Psoas muscle (tissue), 8 donors: ENCODE measurements at regions of chr20 and their contacts with region 1.

Region 1: DNA sequence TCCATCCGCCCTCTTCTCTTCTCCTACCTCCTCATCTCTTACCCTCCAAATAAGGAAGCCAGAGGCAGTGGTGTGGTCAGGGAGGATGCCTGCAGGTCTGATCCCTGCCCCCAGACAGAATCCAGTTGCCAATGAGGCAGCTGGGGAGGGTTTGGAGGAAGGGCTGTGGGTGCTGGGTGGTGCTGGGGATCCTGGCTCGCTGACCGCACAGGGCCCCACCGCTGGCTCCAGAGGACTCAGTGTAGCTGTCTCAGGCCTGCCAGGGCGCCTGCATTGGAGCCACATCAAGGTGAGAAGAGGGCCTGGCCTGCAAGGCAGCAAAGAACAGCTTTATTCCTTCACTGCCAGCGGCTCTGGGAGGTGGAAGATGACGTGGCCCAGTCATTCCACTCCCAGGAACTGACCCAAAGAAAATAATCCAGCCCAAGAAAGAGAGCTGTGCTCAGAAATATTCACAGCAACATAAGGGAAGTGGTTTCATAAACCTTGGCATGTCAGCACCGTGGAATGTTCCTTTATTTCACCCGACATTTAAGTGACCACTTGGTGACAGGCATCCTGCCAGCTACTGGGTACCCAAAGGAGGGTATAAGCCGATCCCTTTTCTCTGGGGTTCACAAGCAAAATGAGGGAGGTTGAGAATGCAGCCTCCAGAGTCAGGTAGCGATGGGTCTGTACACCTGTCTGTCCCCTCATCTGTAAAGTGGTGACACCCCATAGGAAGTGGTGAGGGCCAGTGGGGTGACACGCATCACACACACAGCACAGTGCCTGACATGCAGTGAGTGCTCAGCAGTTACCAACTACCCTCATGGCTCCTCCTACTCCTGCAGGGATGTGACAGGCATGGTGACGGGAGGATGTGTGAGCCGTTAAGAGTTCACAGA is 125.1 kb downstream of the SNX5 start:
- DNase-seq: peak in 1 of 2 donors; percentile 47
- ATAC-seq: peak in 3 of 4 donors; percentile 19 to 51 (median 51)
- H3K4me3 ChIP-seq: no peak overlapping the region
- H3K27ac ChIP-seq: peak overlapping the region; percentile 53
- H3K4me1 ChIP-seq: no peaks in the 10 kb centered on the region
- H3K27me3 ChIP-seq: peaks cover 0 to 2% (median 0%) of the 10 kb centered on the region in 3 donors
- CTCF ChIP-seq: no peak

Region 2: DNA sequence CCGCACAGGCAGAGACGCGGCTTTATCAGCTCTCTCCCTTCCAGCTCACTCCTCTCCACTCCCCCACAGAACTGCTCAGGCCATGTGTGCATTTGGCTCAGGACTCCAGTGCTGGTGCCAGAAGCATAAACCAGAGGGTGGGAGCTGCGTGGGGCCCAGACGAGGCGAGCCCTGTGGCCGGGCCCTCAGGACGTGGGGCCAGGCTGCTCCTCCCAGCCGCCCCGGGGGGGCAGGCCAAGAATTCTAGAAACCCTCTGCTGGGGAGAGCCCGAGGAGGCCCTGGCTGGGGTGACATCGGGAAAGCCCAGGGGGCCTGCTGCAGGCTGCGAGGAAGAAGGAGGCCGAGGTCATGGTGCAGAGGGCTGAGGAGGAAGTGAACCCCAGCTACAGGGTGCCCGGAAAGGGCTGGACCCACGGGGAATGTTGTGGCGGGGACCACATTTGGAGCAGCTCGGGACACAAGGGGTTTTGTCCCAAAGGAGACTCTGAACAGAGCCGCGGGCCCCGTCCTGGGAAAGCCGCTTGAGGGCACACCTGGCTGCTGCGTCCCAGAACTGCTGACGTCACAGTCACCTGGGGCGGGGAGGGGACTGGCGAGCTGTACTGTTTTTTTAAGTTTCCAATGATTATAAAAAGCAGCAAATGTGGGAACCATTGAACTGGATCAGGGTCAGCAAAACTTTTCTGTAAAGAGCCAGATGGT is 36.6 kb before region 1 on chr20:
- intact Hi-C with region 1: loop called in 1 of 2 experiments (anchors 5 kb)
- DNase-seq: peak; percentile 77 to 82
- ATAC-seq: peak; percentile 45 to 71 (median 56)
- H3K4me3 ChIP-seq: peak overlapping the region; percentile 25
- H3K27ac ChIP-seq: peak overlapping the region; percentile 46
- H3K4me1 ChIP-seq: peaks cover 5% of the 10 kb centered on the region
- H3K27me3 ChIP-seq: no peaks in the 10 kb centered on the region
- CTCF ChIP-seq: no peak